Spleen (tissue), 13 donors: ENCODE measurements at regions of chr11 and their contacts with region 1.

Region 1: GRCh38 chr11:126716456-126717083 is 284.0 kb downstream of the KIRREL3 start:
- DNase-seq: no peak
- H3K4me3 ChIP-seq: no peak overlapping the region
- H3K27ac ChIP-seq: no peak overlapping the region
- H3K4me1 ChIP-seq: no peaks in the 10 kb centered on the region
- H3K27me3 ChIP-seq: peaks cover 0 to 41% (median 0%) of the 10 kb centered on the region in 7 donors
- CTCF ChIP-seq: peak in 9 of 11 experiments; percentile 29 to 69 (median 59)
- POLR2A ChIP-seq: no peak

Region 2: DNA sequence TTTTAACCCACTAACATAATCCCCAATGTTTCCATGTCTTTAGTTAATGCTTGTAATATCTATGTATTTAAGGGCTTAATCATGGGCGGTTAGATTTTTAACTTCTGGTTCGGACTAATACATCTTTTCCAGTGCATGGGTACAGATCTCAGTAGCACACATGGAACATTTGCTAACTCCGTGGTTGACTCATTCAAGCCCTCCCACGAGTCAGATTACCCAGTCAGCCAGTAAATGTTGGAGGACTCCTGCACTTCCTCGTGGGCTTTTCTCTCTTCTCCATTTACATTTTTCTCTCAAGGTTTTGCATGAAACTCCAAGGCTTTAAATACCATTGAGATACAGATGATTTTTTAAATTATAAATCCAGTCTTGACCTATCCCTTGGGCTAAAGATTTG is 47.2 kb before region 1 on chr11:
- intact Hi-C with region 1: no loop called
- DNase-seq: no peak
- H3K4me3 ChIP-seq: no peak overlapping the region
- H3K27ac ChIP-seq: no peak overlapping the region
- H3K4me1 ChIP-seq: no peaks in the 10 kb centered on the region
- H3K27me3 ChIP-seq: peaks cover 0 to 20% (median 0%) of the 10 kb centered on the region in 7 donors
- CTCF ChIP-seq: no peak
- POLR2A ChIP-seq: no peak

Region 3: DNA sequence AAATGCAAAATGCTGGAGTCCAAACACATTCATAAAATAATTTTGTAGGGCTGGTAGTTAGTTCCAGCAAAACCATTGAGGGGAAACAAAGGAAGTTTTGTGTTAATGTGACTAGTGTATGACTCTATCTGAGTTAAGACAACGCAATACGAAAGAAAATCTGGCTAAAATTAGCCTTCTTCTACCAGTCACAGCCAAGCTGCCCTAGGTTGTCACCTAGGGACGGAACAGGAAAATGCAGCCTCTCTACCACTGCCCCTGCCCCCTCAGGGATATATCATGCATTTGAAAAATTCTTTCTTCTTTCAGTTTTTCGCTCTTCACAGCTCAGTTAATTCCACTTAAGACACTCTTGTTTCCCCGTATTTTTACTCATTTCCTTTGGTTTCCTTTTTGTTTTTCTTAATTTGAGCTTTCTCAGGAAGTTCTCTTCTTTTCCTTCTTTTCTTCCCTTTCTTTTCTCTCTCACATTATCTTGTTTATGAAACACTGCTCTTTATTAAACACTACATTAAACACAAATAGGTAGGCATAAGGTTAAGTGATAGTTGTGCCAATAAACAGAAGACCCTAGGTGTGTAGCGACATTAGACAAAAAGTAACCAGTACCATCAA is 253.4 kb after region 1 on chr11:
- intact Hi-C with region 1: loop called (anchors 5 kb)
- DNase-seq: no peak
- H3K4me3 ChIP-seq: no peak overlapping the region
- H3K27ac ChIP-seq: no peak overlapping the region
- H3K4me1 ChIP-seq: no peaks in the 10 kb centered on the region
- H3K27me3 ChIP-seq: peaks cover 0 to 43% (median 5%) of the 10 kb centered on the region in 7 donors
- CTCF ChIP-seq: peak in 9 of 11 experiments; percentile 13 to 51 (median 33)
- POLR2A ChIP-seq: no peak

Region 4: GRCh38 chr11:126989942-126990715 is 273.6 kb after region 1 on chr11:
- intact Hi-C with region 1: loop called (anchors 5 kb)
- DNase-seq: peak; percentile 87
- H3K4me3 ChIP-seq: no peak overlapping the region
- H3K27ac ChIP-seq: no peak overlapping the region
- H3K4me1 ChIP-seq: peaks cover 0 to 9% (median 3%) of the 10 kb centered on the region in 6 donors
- H3K27me3 ChIP-seq: peaks cover 0 to 32% (median 6%) of the 10 kb centered on the region in 7 donors
- CTCF ChIP-seq: peak; percentile 41 to 93 (median 86)
- POLR2A ChIP-seq: no peak

Region 5: DNA sequence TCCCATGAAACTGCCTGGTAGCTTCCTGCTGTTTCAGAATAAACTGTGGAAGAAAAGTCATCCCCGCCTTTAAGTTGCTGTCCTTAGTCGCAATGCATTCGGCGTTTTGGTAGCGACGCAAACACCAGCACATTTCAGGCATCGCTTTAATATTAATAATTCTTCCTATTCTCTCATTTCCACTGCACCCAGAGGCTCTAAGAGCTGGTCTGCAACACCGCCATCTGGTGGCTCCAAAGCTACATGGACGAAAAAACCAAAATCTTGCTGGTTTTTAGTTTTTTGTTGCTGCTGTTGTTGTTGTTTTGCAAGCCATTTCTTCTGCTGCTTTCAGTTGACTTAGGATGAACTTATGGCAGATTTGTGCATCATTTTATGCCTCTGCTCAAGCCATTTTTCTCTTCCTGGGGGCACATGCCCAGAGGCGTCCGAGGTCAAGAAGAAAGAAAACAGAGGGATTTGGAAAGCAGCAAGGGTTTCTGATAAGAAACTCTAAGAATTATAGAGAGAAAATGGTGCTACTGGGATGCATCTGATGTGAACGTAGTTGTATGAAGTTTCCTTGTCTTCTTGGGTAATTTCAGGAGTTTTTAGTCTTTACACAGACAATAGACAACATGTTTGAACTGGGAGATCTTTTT is 629.4 kb after region 1 on chr11:
- intact Hi-C with region 1: loop called (anchors 10 kb)
- DNase-seq: no peak
- H3K4me3 ChIP-seq: no peak overlapping the region
- H3K27ac ChIP-seq: no peak overlapping the region
- H3K4me1 ChIP-seq: no peaks in the 10 kb centered on the region
- H3K27me3 ChIP-seq: no peaks in the 10 kb centered on the region
- CTCF ChIP-seq: peak in 9 of 11 experiments; percentile 5 to 62 (median 46)
- POLR2A ChIP-seq: no peak